Colonic mucosa (tissue), 4 donors: ENCODE measurements at regions of chr4 and their contacts with region 1.

Region 1: GRCh38 chr4:88533937-88534750 is 10.6 kb upstream of the PYURF start:
- DNase-seq: no peak
- H3K4me3 ChIP-seq: no peak overlapping the region
- H3K27ac ChIP-seq: no peak overlapping the region
- H3K4me1 ChIP-seq: no peaks in the 10 kb centered on the region
- H3K27me3 ChIP-seq: no peaks in the 10 kb centered on the region
- CTCF ChIP-seq: no peak

Region 2: DNA sequence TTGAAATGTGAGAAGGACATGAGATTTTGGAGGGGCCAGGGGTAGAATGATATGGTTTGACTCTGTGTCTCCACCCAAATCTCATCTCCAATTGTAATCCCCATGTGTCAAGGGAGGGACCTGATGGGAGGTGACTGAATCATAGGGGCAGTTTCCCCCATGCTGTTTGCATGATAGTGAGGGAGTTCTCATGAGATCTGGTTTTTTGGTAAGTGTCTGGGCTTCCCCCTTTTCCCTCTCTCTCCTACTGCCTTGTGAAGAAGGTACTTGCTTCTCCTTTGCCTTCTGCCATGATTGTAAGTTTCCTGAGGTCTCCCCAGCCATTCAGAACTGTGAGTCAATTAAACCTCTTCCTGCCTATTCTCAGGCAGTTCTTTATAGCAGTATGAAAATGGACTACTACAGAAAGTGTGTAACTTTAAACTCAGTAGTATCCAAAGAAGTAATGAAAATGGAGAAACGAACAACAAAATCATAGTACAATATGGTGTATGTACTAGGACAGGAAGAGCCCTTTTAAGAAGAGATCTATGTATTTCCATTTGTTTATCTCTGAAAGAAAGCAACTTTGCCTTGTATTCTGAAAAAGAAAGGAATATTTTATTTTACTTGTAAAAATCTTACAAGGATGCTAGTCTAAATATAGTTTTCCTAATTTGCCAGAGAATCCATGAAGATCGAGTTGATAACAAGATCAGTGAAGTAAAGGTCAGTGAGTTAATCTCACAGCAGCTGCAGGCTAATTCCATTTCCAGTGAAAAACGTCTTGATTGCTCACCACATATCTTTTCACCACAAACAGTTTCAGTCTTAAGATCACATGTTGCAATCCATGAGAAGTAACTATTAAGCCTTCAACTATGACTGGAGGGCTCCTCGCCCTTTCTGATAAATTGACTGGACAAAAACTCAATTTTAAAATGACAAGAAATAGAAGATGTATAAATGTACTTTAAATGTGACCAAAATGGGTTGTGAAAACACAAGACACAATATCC is 506.2 kb before region 1 on chr4:
- intact Hi-C with region 1: no loop called
- DNase-seq: no peak
- H3K4me3 ChIP-seq: no peak overlapping the region
- H3K27ac ChIP-seq: no peak overlapping the region
- H3K4me1 ChIP-seq: no peaks in the 10 kb centered on the region
- H3K27me3 ChIP-seq: no peaks in the 10 kb centered on the region
- CTCF ChIP-seq: no peak

Region 3: DNA sequence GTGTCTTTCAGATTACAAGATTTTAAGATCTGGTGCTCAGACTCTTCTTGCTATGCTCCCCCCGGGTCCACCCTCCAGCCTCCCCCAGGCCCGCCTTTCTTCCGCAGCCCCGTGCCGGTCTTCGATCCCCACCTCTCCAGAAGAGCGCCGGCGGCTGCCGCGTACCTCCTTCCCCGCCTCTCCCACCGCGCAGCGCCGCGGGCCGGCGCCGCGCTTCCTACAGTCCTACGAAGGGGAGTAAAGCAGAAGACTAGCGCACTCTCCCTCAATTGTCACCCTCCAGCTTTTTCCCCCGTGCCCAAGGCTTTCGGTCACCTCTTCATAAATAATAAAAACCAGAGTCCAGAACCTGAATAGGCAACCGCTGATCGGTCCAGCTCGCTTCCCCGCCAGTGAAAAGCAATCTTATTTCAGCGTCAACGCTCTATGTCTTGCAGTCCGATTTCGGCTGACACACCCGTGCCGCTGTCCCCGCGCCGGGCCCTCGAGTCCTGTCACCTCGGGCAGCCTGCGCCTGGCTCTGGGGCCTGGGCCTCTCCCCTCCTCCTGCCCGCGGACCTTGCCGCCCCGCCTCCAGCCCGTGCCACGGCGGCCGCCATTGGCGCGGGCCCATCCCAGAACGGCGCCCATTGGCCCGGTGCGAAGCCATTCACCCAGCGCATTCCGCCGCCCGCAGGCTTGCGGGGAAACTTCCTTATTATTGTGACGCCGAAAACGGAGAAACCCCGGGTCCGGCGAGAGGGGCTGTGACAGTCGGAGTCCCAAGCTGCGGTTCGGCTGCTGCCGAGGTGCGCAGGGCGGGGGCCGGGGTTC is 57.8 kb after region 1 on chr4 and contains the start of gene HERC3:
- intact Hi-C with region 1: loop called (anchors 2 kb)
- DNase-seq: peak; percentile 93
- H3K4me3 ChIP-seq: peak within 1 kb of the TSS; percentile 92
- H3K27ac ChIP-seq: peak within 1 kb of the TSS; percentile 96
- H3K4me1 ChIP-seq: peaks cover 8% of the 10 kb centered on the region
- H3K27me3 ChIP-seq: no peaks in the 10 kb centered on the region
- CTCF ChIP-seq: no peak
- total RNA-seq, gene HERC3: 23.0 to 51.4 TPM

Region 4: GRCh38 chr4:88659055-88659889 is 125.1 kb after region 1 on chr4:
- intact Hi-C with region 1: loop called (anchors 5 kb)
- DNase-seq: peak; percentile 49
- H3K4me3 ChIP-seq: no peak overlapping the region
- H3K27ac ChIP-seq: peak overlapping the region; percentile 13
- H3K4me1 ChIP-seq: no peaks in the 10 kb centered on the region
- H3K27me3 ChIP-seq: no peaks in the 10 kb centered on the region
- CTCF ChIP-seq: peak; percentile 79

Region 5: GRCh38 chr4:89039730-89040338 is 505.7 kb after region 1 on chr4:
- intact Hi-C with region 1: loop called (anchors 10 kb)
- DNase-seq: no peak
- H3K4me3 ChIP-seq: no peak overlapping the region
- H3K27ac ChIP-seq: no peak overlapping the region
- H3K4me1 ChIP-seq: no peaks in the 10 kb centered on the region
- H3K27me3 ChIP-seq: no peaks in the 10 kb centered on the region
- CTCF ChIP-seq: no peak